B cell (primary cell): ENCODE measurements at regions of chr14 and their contacts with region 1.

Region 1: GRCh38 chr14:104563742-104564615 is 15.6 kb upstream of the C14orf180 start:
- DNase-seq: peak; percentile 68
- ATAC-seq: peak; percentile 62
- H3K4me3 ChIP-seq: no peak overlapping the region
- H3K4me3 Mint-ChIP-seq: peak overlapping the region; percentile 34
- H3K27ac ChIP-seq: no peak overlapping the region
- H3K27ac Mint-ChIP-seq: no peak overlapping the region
- H3K4me1 ChIP-seq: peaks cover 11 to 12% of the 10 kb centered on the region in 2 donors
- H3K4me1 Mint-ChIP-seq: peaks cover 7% of the 10 kb centered on the region
- H3K27me3 ChIP-seq: peaks cover 0 to 32% (median 10%) of the 10 kb centered on the region in 4 experiments
- H3K27me3 Mint-ChIP-seq: peaks cover 27% of the 10 kb centered on the region
- CTCF ChIP-seq: peak; percentile 73

Region 2: DNA sequence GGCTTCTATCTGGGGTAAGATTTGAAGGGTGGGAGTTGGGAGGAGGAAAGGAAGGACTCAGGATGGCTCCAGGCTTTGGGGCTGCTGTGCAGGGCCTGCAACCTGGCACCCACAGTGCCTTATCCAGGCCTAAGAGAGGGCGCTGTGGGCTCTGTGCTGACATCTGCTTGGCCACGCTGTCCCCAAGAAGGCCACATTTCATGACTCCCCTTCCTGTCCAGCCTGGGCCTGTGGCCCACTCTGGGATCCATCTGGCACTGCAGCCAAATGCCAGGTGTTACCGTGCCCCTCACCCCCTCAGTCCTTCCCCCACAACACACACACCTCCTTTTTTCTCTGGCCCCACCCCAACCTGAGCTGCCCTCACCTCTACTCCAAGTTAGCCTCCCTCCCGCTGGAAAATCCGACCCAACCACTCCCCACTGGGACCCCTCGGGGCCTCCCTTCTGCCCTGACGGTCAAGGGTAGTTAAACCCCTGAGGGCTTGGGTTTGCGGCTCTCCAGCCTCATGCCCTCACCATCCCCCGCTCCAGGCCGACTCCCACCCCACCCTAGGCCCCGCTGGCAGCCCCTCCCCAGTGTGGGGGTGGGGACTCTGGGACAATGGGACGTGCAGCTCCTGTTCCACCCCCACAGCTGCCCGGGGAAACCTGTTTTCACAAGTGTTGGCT is 708.8 kb before region 1 on chr14:
- CTCF ChIA-PET with region 1: no interaction called
- POLR2A ChIA-PET with region 1: no interaction called
- intact Hi-C with region 1: no loop called
- DNase-seq: no peak
- ATAC-seq: no peak
- H3K4me3 ChIP-seq: no peak overlapping the region
- H3K4me3 Mint-ChIP-seq: no peak overlapping the region
- H3K27ac ChIP-seq: no peak overlapping the region
- H3K27ac Mint-ChIP-seq: no peak overlapping the region
- H3K4me1 ChIP-seq: no peaks in the 10 kb centered on the region
- H3K4me1 Mint-ChIP-seq: no peaks in the 10 kb centered on the region
- H3K27me3 ChIP-seq: no peaks in the 10 kb centered on the region
- H3K27me3 Mint-ChIP-seq: no peaks in the 10 kb centered on the region
- CTCF ChIP-seq: no peak

Region 3: GRCh38 chr14:104137297-104138097 is 426.5 kb before region 1 on chr14:
- CTCF ChIA-PET with region 1: interaction called, 12 read pairs
- POLR2A ChIA-PET with region 1: no interaction called
- intact Hi-C with region 1: no loop called
- DNase-seq: peak; percentile 72
- ATAC-seq: peak; percentile 65
- H3K4me3 ChIP-seq: peak overlapping the region in 4 of 5 experiments; percentile 22 to 49 (median 36)
- H3K4me3 Mint-ChIP-seq: peak overlapping the region; percentile 74
- H3K27ac ChIP-seq: no peak overlapping the region
- H3K27ac Mint-ChIP-seq: no peak overlapping the region
- H3K4me1 ChIP-seq: peaks cover 26 to 34% of the 10 kb centered on the region in 2 donors
- H3K4me1 Mint-ChIP-seq: peaks cover 9% of the 10 kb centered on the region
- H3K27me3 ChIP-seq: peaks cover 0 to 64% (median 22%) of the 10 kb centered on the region in 4 experiments
- H3K27me3 Mint-ChIP-seq: peaks cover 23% of the 10 kb centered on the region
- CTCF ChIP-seq: peak; percentile 80